ENCODE measurements at regions of chr11 and their contacts with region 1.

Region 1: GRCh38 chr11:2532704-2533586 is 88.1 kb downstream of the KCNQ1 start:
- DNase-seq: peak; percentile 90
- H3K4me3 ChIP-seq: peak overlapping the region in 1 of 2 experiments; percentile 34; a peak in 1 of 4 replicates
- H3K27ac ChIP-seq: peak overlapping the region in 1 of 2 experiments; percentile 62; a peak in 2 of 4 replicates
- H3K4me1 ChIP-seq: peaks cover 5 to 9% of the 10 kb centered on the region in 2 experiments; a peak in 2 of 4 replicates
- H3K27me3 ChIP-seq: no peaks in the 10 kb centered on the region
- CTCF ChIP-seq: peak; percentile 98
- EP300 ChIP-seq: no peak
- RAD21 ChIP-seq: peak; percentile 97

Region 2: DNA sequence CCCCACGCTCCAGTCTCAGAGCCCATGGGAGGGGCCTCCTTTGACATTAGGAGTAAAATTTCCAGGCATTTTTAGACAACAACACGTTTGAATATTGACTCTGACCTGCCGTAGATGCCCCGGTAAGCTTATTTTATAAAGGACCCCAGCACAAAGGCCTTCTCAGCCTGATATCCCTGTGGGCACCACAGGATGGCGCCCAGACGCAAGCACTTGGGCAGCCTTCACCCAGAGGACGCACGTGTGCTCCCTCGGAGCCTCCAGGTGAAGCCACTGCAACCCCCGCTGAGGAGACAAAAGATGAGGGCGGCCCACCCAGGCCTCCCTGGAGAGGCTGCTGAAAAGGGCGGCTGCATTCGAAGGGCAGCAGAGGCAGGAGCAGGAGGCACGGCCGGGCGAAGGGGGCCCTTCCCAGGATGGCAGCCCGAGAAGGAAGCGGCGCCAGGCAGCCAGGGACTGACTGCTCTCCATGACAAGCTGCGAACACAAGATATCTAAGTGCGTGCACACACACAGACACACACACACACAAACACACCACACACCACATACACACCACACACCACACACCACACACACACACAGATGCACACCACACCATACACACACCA is 346.2 kb before region 1 on chr11:
- CTCF ChIA-PET with region 1: interaction called, 12 read pairs
- POLR2A ChIA-PET with region 1: no interaction called
- DNase-seq: peak; percentile 80
- H3K4me3 ChIP-seq: no peak overlapping the region
- H3K27ac ChIP-seq: no peak overlapping the region; a peak in 1 of 4 replicates
- H3K4me1 ChIP-seq: peaks cover 0 to 39% of the 10 kb centered on the region in 2 experiments; a peak in 1 of 4 replicates
- H3K27me3 ChIP-seq: no peaks in the 10 kb centered on the region
- CTCF ChIP-seq: peak; percentile 17; the same call in 1 of the 2 replicates
- EP300 ChIP-seq: no peak
- RAD21 ChIP-seq: peak; percentile 73

Region 3: DNA sequence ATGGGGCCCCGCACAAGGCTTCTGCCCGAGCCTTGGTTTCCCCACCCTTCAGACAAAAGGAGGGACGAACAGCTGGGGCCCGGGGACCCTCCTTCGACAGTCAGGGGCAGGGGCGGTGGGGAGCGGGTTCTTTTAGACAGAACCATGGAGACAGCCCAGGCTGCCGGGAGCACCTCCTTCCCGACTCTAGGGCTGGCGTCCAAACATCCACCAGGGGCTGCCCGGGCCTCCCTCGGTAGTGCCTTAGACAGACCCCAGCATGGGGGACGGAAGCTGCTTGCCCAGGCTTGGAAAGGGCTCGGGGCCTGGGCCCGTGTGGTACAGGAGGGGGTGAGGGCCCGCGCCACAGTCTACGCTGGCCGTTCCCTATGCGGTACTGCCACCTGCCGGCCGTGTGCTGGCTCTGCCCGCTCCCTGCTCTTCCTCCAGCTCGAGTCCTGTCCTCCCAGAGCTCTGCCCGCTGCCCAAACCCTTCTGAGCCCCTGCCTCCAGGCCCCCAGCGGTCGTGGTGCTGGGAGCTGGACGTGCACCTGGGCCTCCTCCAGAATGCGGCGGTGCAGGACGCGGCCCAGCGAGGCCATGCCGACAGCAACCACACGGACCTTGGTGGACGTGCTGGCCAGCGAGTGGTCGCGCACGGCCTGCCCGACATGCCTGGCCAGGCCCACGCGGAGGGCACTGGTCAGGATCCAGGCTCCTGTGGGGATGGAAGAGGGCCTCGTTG is 112.3 kb before region 1 on chr11:
- CTCF ChIA-PET with region 1: interaction called, 461 read pairs
- POLR2A ChIA-PET with region 1: no interaction called
- DNase-seq: peak; percentile 99
- H3K4me3 ChIP-seq: no peak overlapping the region; a peak in 1 of 4 replicates
- H3K27ac ChIP-seq: no peak overlapping the region
- H3K4me1 ChIP-seq: no peaks in the 10 kb centered on the region; a peak in 1 of 4 replicates
- H3K27me3 ChIP-seq: no peaks in the 10 kb centered on the region
- CTCF ChIP-seq: peak; percentile 85
- EP300 ChIP-seq: no peak
- RAD21 ChIP-seq: peak; percentile 91

Region 4: GRCh38 chr11:2511421-2512369 is 21.2 kb before region 1 on chr11:
- CTCF ChIA-PET with region 1: interaction called, 17 read pairs
- POLR2A ChIA-PET with region 1: no interaction called
- DNase-seq: peak; percentile 34
- H3K4me3 ChIP-seq: no peak overlapping the region
- H3K27ac ChIP-seq: no peak overlapping the region
- H3K4me1 ChIP-seq: peaks cover 0 to 9% of the 10 kb centered on the region in 2 experiments; a peak in 1 of 4 replicates
- H3K27me3 ChIP-seq: no peaks in the 10 kb centered on the region
- CTCF ChIP-seq: no peak
- EP300 ChIP-seq: no peak
- RAD21 ChIP-seq: no peak

Region 5: GRCh38 chr11:2621894-2622293 is 88.9 kb after region 1 on chr11:
- CTCF ChIA-PET with region 1: no interaction called
- POLR2A ChIA-PET with region 1: no interaction called
- DNase-seq: no peak
- H3K4me3 ChIP-seq: no peak overlapping the region
- H3K27ac ChIP-seq: no peak overlapping the region
- H3K4me1 ChIP-seq: no peaks in the 10 kb centered on the region
- H3K27me3 ChIP-seq: no peaks in the 10 kb centered on the region
- CTCF ChIP-seq: no peak
- EP300 ChIP-seq: no peak
- RAD21 ChIP-seq: no peak

Region 6: DNA sequence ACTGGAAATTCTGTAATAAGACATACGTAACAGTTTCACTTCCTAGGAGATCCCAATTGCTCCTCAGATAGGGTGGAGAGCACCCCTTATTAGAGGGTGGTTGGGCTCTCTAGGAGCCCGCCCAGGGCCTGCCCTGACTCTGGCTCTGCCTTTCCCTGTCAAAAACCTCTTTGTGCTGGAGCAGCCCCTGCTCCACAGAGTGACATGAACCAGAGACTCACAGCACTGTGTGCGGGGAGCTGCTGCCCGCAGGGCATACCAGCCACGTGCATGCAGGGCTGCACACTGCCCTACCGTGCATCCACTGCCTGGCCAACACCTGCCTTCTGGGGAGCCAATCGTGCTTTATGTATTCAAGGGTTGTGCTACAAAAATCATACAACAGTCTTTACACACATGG is 142.6 kb after region 1 on chr11:
- CTCF ChIA-PET with region 1: interaction called, 64 read pairs
- POLR2A ChIA-PET with region 1: interaction called, 4 read pairs
- DNase-seq: peak; percentile 90
- H3K4me3 ChIP-seq: no peak overlapping the region
- H3K27ac ChIP-seq: peak overlapping the region in 1 of 2 experiments; percentile 89; a peak in 2 of 4 replicates
- H3K4me1 ChIP-seq: peaks cover 0 to 57% of the 10 kb centered on the region in 2 experiments; a peak in 2 of 4 replicates
- H3K27me3 ChIP-seq: no peaks in the 10 kb centered on the region
- CTCF ChIP-seq: no peak
- EP300 ChIP-seq: peak in 1 of 2 experiments; percentile 88; a peak in 2 of 4 replicates
- RAD21 ChIP-seq: no peak; the same call in 1 of the 2 replicates

Region 7: DNA sequence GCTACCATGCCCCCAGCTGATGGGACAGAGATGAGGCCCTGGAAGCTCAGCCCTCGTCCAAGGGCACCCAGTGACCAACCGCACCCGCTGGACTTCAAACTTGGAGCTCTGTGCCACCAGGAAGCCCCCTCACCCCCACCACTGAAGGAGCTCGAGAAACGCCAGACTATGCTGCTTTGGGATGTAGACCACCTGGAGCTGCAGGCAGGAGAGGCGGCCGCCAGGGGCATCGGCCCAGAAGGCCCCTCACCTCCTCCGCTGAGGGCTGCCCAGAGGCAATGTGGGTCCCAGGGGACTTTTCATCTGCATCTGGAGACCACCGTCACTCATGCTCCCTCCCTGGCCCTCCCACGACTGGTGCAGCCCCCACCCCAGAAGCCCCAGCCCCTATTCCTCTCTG is 324.3 kb after region 1 on chr11:
- CTCF ChIA-PET with region 1: interaction called, 11 read pairs
- POLR2A ChIA-PET with region 1: no interaction called
- DNase-seq: no peak
- H3K4me3 ChIP-seq: no peak overlapping the region
- H3K27ac ChIP-seq: no peak overlapping the region
- H3K4me1 ChIP-seq: peaks cover 0 to 4% of the 10 kb centered on the region in 2 experiments; a peak in 1 of 4 replicates
- H3K27me3 ChIP-seq: 0 out of 2 replicates have a peak, but pooled peaks cover 4% of the 10 kb centered on the region
- CTCF ChIP-seq: no peak
- EP300 ChIP-seq: no peak
- RAD21 ChIP-seq: no peak

Region 8: GRCh38 chr11:2940559-2940929 is 407.6 kb after region 1 on chr11:
- CTCF ChIA-PET with region 1: interaction called, 10 read pairs
- POLR2A ChIA-PET with region 1: no interaction called
- DNase-seq: peak; percentile 30
- H3K4me3 ChIP-seq: no peak overlapping the region
- H3K27ac ChIP-seq: peak overlapping the region in 1 of 2 experiments; percentile 8; a peak in 1 of 4 replicates
- H3K4me1 ChIP-seq: peaks cover 0 to 26% of the 10 kb centered on the region in 2 experiments; a peak in 2 of 4 replicates
- H3K27me3 ChIP-seq: no peaks in the 10 kb centered on the region
- CTCF ChIP-seq: no peak
- EP300 ChIP-seq: no peak
- RAD21 ChIP-seq: no peak

Measured in SK-N-SH (cell line).